ENCODE measurements at regions of chr4 and their contacts with region 1.

Region 1: DNA sequence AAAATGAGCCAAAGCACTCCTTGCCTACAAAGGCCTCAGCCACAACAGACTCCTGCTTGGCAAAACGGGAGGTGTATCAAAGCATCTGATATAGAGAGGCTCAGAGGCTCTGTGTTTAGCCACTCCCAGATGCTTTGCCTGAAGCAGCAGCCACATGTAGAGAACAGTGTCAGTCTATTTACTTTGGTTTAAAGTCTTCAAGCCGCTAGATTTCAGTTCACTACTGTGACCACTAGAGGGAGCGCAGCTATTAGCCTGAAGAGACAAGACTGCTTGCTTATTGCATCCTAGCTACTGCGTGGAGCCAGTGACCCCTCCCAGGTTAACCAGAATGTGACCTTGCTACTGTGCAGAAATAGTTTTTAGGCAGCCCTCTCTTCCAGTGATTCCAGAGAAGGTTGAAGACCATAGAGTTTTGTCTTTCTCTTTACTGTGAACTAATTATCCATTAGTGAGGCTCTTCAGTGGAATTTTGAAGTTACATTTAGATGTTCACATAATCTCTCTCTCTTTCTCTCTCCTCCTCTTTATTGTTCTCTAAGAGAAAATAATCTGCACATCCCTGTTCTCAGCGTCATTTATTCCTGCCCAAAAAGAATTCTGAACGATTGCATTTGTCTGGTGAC is 39.3 kb downstream of the BMP3 start:
- DNase-seq: peak; percentile 72 to 74
- H3K4me3 ChIP-seq: no peak overlapping the region
- H3K4me1 ChIP-seq: no peaks in the 10 kb centered on the region
- H3K27me3 ChIP-seq: peaks cover 5% of the 10 kb centered on the region

Region 2: DNA sequence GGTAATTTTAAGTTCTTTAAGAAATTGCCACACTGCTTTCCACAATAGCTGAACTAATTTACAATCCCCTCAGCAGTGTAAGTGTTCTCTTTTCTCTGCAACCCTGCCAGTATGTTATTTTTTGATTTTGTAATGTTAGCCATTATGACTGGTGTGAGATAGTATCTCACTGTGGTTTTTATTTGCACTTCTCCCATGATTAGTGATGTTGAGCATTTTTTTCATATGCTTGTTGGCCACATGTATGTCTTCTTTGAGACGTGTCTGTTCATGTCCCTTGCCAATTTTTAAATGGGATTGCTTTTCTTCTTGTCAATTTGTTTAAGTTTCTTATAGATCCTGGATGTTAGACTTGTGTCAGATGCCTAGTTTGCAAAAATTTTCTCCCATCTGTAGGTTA is 46.7 kb after region 1 on chr4:
- in situ Hi-C with region 1: no loop called
- DNase-seq: no peak
- H3K4me3 ChIP-seq: no peak overlapping the region
- H3K4me1 ChIP-seq: no peaks in the 10 kb centered on the region
- H3K27me3 ChIP-seq: no peaks in the 10 kb centered on the region

Region 3: GRCh38 chr4:81343046-81343445 is 273.2 kb after region 1 on chr4:
- in situ Hi-C with region 1: loop called (anchors 10 kb)
- DNase-seq: no peak
- H3K4me3 ChIP-seq: no peak overlapping the region
- H3K4me1 ChIP-seq: no peaks in the 10 kb centered on the region
- H3K27me3 ChIP-seq: no peaks in the 10 kb centered on the region